ENCODE measurements at regions of chr9 and their contacts with region 1.

Region 1: DNA sequence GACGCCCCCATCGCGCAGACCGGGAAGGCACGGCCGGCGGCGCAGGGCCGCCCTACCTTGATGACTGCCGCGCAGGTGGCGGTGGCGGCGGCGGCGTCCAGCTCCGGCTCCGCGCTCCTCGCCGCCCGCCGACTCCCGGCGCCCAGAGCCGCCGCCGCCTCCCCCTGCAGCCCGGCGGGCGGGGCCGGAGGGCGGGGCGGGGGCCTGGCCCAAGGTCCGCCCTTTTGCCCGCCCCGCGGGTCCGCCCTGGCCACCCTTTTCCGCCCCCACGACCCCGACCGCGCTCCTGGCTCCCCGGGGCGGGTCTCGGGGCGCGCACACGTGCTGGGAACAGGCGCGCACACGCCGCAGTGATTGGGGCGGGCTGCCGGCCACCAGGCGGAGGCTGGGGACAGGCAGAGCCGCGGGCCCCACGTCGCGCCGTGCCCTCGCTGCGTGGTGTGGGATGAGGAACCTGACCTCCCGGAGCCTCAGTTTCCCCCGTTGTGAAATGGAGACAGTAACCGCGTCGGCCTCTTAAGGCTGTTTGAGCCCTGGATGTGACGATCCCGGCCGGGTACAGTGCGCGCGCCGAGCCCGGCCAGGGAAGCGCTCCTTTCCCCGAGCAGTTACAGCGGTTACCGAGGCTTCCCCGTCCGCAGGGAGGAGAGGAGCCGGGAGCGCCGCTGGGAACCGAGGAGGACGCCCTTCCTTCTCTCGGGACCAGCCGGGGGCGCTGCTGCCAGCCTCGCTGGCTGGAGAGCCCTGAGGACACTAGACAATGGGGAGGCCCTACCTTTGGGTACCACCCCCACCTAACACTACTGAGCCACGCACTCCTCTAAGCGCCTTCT is at the start of gene CORO2A:
- DNase-seq: peak; percentile 67
- ATAC-seq: peak; percentile 76
- H3K4me3 ChIP-seq: peak within 1 kb of the TSS; percentile 78
- H3K27ac ChIP-seq: no peak within 1 kb of the TSS; the same call in 1 of the 2 replicates
- H3K4me1 ChIP-seq: no peaks in the 10 kb centered on the region; the same call in 1 of the 2 replicates
- H3K27me3 ChIP-seq: no peaks in the 10 kb centered on the region
- CTCF ChIP-seq: peak; percentile 51
- total RNA-seq, gene CORO2A: 2.2 and 2.8 TPM in 2 replicates

Region 2: GRCh38 chr9:98074115-98074990 is 118.4 kb before region 1 on chr9:
- CTCF ChIA-PET with region 1: no interaction called
- POLR2A ChIA-PET with region 1: no interaction called
- intact Hi-C with region 1: loop called (anchors 5 kb)
- DNase-seq: peak; percentile 70
- ATAC-seq: peak; percentile 28; the same call in 1 of the 2 replicates
- H3K4me3 ChIP-seq: no peak overlapping the region
- H3K27ac ChIP-seq: no peak overlapping the region
- H3K4me1 ChIP-seq: peaks cover 7% of the 10 kb centered on the region; the same call in 1 of the 2 replicates
- H3K27me3 ChIP-seq: no peaks in the 10 kb centered on the region
- CTCF ChIP-seq: peak; percentile 89

Region 3: GRCh38 chr9:98118640-98119601 is 73.8 kb before region 1 on chr9 and contains the start of gene TRIM14:
- CTCF ChIA-PET with region 1: no interaction called
- POLR2A ChIA-PET with region 1: no interaction called
- intact Hi-C with region 1: loop called (anchors 2 kb)
- DNase-seq: peak; percentile 62
- ATAC-seq: peak; percentile 81
- H3K4me3 ChIP-seq: peak within 1 kb of the TSS; percentile 88
- H3K27ac ChIP-seq: peak within 1 kb of the TSS; percentile 30
- H3K4me1 ChIP-seq: peaks cover 16% of the 10 kb centered on the region
- H3K27me3 ChIP-seq: no peaks in the 10 kb centered on the region
- CTCF ChIP-seq: peak; percentile 47; the same call in 1 of the 2 replicates
- total RNA-seq, gene TRIM14: 11.2 and 17.3 TPM in 2 replicates

Region 4: GRCh38 chr9:98146101-98146991 is 46.4 kb before region 1 on chr9:
- CTCF ChIA-PET with region 1: no interaction called
- POLR2A ChIA-PET with region 1: no interaction called
- intact Hi-C with region 1: loop called (anchors 10 kb)
- DNase-seq: peak; percentile 62
- ATAC-seq: peak; percentile 23
- H3K4me3 ChIP-seq: no peak overlapping the region
- H3K27ac ChIP-seq: peak overlapping the region; percentile 65
- H3K4me1 ChIP-seq: peaks cover 39% of the 10 kb centered on the region
- H3K27me3 ChIP-seq: no peaks in the 10 kb centered on the region
- CTCF ChIP-seq: no peak